ENCODE measurements at regions of chr21 and their contacts with region 1.

Region 1: GRCh38 chr21:33924079-33924765 is 8.6 kb upstream of the ATP5PO start:
- H3K4me3 Mint-ChIP-seq: no peak overlapping the region
- H3K27ac Mint-ChIP-seq: peak overlapping the region; percentile 31
- H3K4me1 Mint-ChIP-seq: peaks cover 14% of the 10 kb centered on the region
- H3K27me3 Mint-ChIP-seq: peaks cover 11% of the 10 kb centered on the region

Region 2: GRCh38 chr21:34078915-34079314 is 154.7 kb after region 1 on chr21:
- intact Hi-C with region 1: loop called (anchors 5 kb)
- H3K4me3 Mint-ChIP-seq: peak overlapping the region; percentile 32
- H3K27ac Mint-ChIP-seq: no peak overlapping the region
- H3K4me1 Mint-ChIP-seq: peaks cover 89% of the 10 kb centered on the region
- H3K27me3 Mint-ChIP-seq: no peaks in the 10 kb centered on the region

Region 3: GRCh38 chr21:34202553-34203372 is 278.5 kb after region 1 on chr21:
- intact Hi-C with region 1: loop called (anchors 2 kb)
- H3K4me3 Mint-ChIP-seq: peak overlapping the region; percentile 54
- H3K27ac Mint-ChIP-seq: peak overlapping the region; percentile 73
- H3K4me1 Mint-ChIP-seq: peaks cover 89% of the 10 kb centered on the region
- H3K27me3 Mint-ChIP-seq: no peaks in the 10 kb centered on the region

Region 4: GRCh38 chr21:34243562-34243961 is 319.3 kb after region 1 on chr21:
- intact Hi-C with region 1: loop called (anchors 5 kb)
- H3K4me3 Mint-ChIP-seq: no peak overlapping the region
- H3K27ac Mint-ChIP-seq: no peak overlapping the region
- H3K4me1 Mint-ChIP-seq: peaks cover 5% of the 10 kb centered on the region
- H3K27me3 Mint-ChIP-seq: peaks cover 9% of the 10 kb centered on the region

Region 5: DNA sequence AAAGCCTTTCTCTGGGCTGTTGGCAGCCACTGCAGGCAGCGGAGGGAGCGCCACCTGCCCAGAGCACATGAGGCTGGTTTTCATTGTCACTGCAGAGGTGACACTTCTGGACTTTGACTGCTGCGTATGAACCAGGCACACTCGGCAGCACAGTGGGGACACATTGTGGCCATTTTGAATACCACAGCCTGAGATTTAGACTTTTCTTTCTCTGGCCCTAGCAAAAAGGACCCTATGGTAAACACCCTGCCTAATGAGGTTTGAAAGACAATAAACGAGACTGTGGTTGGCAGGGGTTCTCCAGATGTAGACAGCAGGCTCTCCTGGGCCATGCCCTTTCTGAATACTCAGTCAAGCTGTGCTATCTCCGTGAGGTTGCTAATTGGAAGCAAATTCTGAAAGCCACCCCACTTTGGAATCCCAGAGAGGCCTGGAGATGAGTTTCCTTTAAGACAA is 427.6 kb after region 1 on chr21:
- intact Hi-C with region 1: loop called (anchors 2 kb)
- H3K4me3 Mint-ChIP-seq: no peak overlapping the region
- H3K27ac Mint-ChIP-seq: no peak overlapping the region
- H3K4me1 Mint-ChIP-seq: no peaks in the 10 kb centered on the region
- H3K27me3 Mint-ChIP-seq: peaks cover 22% of the 10 kb centered on the region